HCT116 (cell line): ENCODE measurements at regions of chr12 and their contacts with region 1.

Region 1: GRCh38 chr12:80622271-80622670 is 85.2 kb upstream of the MYF6 start:
- DNase-seq: no peak
- ATAC-seq: peak; percentile 72
- H3K4me3 ChIP-seq: no peak overlapping the region
- H3K27ac ChIP-seq: no peak overlapping the region
- H3K4me1 ChIP-seq: no peaks in the 10 kb centered on the region; a peak in 1 of 4 replicates
- H3K27me3 ChIP-seq: no peaks in the 10 kb centered on the region
- CTCF ChIP-seq: peak; percentile 30 to 56 (median 50); a peak in 5 of 6 replicates
- POLR2A ChIP-seq: no peak
- RAD21 ChIP-seq: peak; percentile 49

Region 2: DNA sequence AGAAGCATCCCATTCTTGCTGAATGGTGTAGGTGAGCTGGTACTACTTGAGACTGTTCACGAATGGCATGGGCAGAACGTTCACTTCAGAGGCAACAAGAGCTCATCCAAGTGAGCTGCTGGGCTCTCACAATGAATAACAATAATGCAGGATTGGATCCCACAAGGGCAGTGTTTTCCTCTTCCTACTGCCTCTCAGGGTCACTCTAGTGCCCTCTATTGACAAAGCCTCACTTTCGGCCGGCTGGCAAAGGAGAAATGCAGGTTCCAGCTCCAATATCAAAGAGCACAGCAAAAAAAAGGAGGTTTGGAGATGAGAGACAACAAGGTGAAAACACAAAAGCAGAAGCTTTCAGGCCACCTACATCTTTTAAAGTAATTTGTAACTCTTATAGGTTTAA is 10.6 kb after region 1 on chr12:
- CTCF ChIA-PET with region 1: interaction called, 41 read pairs
- POLR2A ChIA-PET with region 1: no interaction called
- RAD21 ChIA-PET with region 1: no interaction called
- intact Hi-C with region 1: no loop called
- DNase-seq: no peak
- ATAC-seq: peak; percentile 95
- H3K4me3 ChIP-seq: no peak overlapping the region
- H3K27ac ChIP-seq: no peak overlapping the region
- H3K4me1 ChIP-seq: peaks cover 0 to 6% of the 10 kb centered on the region in 2 experiments; a peak in 2 of 4 replicates
- H3K27me3 ChIP-seq: no peaks in the 10 kb centered on the region
- CTCF ChIP-seq: peak; percentile 37 to 69 (median 65); a peak in 5 of 6 replicates
- POLR2A ChIP-seq: no peak
- RAD21 ChIP-seq: peak; percentile 51

Region 3: DNA sequence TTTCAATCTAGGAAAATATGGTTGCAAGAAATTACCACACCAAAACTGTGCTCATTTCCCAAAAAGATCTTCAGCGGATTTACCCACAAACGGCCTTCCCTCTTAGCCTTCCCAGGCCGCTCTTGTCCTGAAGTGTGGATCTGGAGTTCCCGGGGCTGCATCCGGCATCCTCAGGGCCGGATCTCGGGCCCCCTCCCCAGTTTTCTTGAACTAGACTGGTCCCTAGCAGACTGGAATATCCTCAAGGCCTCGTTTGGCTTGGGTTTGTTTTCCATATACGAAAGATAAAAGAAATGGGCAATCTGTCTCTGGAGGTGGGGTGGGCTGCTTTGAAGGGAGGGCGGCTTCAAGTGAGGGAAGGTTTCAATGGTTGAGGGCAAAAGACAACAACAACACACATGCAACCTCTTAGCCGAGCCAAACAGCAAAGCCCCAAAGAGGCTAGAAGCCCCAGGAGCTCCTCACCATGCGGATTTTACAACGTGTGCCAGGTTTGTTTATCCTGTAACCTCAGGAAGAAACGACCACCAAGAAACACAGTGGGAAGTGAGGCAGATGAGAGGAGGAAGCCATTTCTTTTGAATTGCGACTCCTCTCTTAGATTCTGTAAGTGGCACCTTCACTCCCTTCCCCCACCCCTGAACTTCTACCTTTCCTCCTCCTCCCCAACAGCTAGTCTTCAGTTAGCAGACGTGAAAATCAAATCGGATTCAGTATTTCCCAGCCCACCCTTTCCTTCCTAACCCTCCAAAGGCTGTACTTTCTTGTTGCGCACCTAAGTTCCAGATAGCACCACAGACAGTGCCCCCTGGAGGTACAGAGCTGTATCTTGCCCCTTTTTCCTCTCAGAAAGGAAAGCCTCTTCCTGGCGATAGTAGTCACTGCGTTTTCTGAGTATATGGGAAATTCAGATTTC is 87.8 kb after region 1 on chr12:
- CTCF ChIA-PET with region 1: no interaction called
- POLR2A ChIA-PET with region 1: no interaction called
- RAD21 ChIA-PET with region 1: no interaction called
- intact Hi-C with region 1: no loop called
- DNase-seq: peak; percentile 4
- ATAC-seq: peak; percentile 85
- H3K4me3 ChIP-seq: no peak overlapping the region
- H3K27ac ChIP-seq: no peak overlapping the region
- H3K4me1 ChIP-seq: no peaks in the 10 kb centered on the region
- H3K27me3 ChIP-seq: 0 out of 2 replicates have a peak, but pooled peaks cover 5% of the 10 kb centered on the region
- CTCF ChIP-seq: peak; percentile 16 to 87 (median 85); a peak in 4 of 6 replicates
- POLR2A ChIP-seq: no peak
- RAD21 ChIP-seq: peak; percentile 18; the same call in 1 of the 2 replicates